ENCODE measurements at regions of chr6 and their contacts with region 1.

Region 1: DNA sequence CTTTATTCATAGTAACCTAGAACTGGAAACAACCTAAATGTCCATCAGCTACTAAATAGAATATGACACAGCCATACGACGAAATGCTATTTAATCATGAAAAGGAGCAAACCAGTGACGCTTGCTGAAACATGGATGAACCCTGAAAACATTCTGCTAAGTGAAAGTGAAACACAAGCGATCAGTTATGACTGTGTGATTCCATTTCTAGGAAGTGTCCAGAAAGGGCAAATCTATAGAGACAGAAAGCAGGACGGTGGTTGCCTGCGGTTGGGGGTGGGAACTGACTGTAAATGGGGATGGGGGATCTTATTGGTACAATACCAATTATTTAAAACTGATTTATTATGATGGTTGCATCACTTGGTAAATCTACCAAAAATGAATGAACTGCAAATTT is 126.8 kb downstream of the IPCEF1 start:
- DNase-seq: peak; percentile 84
- H3K4me3 Mint-ChIP-seq: peak overlapping the region; percentile 66
- H3K27ac Mint-ChIP-seq: peak overlapping the region; percentile 86
- H3K4me1 Mint-ChIP-seq: peaks cover 81% of the 10 kb centered on the region
- H3K27me3 Mint-ChIP-seq: no peaks in the 10 kb centered on the region

Region 2: DNA sequence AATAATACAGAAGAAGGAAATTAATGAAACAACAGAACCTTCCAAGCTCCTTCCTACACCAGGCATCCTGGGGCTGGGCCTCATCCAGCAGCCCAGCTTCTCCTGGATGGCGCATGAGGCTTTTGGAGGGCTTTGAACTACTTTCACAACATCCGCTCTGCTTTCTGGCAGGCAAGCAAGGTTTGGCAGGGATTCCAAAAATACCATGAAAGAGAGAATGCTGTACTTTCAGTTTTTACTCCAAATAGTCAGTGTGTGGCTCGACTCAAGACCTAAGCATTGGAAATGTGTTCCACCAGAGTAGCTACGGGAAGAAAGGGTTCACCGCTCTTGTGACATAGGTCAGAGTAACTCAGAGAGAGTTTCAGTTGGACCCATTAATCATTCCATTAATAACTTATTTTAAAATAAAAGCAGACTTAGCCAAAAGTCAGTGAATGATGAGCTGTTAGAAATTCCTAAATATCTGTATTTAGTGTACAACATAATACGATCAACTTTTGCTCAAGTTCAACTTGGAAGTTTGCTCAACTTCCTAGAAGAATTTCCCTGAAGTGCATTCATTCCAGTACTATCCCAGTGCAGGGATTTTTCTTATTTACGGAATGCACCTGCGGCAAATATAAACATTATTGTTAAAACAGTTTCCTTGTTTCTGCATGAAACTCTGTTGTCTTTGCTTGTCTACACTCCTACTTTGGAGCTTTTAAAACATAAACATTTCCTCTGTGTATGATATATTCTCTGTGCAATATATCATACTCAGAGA is 65.2 kb before region 1 on chr6:
- CTCF ChIA-PET with region 1: no interaction called
- intact Hi-C with region 1: loop called (anchors 1 kb)
- DNase-seq: no peak
- H3K4me3 Mint-ChIP-seq: peak overlapping the region; percentile 23
- H3K27ac Mint-ChIP-seq: no peak overlapping the region
- H3K4me1 Mint-ChIP-seq: peaks cover 53% of the 10 kb centered on the region
- H3K27me3 Mint-ChIP-seq: no peaks in the 10 kb centered on the region

Region 3: GRCh38 chr6:154197196-154197860 is 32.5 kb before region 1 on chr6:
- CTCF ChIA-PET with region 1: no interaction called
- intact Hi-C with region 1: loop called (anchors 2 kb)
- DNase-seq: no peak
- H3K4me3 Mint-ChIP-seq: peak overlapping the region; percentile 28
- H3K27ac Mint-ChIP-seq: no peak overlapping the region
- H3K4me1 Mint-ChIP-seq: peaks cover 60% of the 10 kb centered on the region
- H3K27me3 Mint-ChIP-seq: no peaks in the 10 kb centered on the region

Region 4: DNA sequence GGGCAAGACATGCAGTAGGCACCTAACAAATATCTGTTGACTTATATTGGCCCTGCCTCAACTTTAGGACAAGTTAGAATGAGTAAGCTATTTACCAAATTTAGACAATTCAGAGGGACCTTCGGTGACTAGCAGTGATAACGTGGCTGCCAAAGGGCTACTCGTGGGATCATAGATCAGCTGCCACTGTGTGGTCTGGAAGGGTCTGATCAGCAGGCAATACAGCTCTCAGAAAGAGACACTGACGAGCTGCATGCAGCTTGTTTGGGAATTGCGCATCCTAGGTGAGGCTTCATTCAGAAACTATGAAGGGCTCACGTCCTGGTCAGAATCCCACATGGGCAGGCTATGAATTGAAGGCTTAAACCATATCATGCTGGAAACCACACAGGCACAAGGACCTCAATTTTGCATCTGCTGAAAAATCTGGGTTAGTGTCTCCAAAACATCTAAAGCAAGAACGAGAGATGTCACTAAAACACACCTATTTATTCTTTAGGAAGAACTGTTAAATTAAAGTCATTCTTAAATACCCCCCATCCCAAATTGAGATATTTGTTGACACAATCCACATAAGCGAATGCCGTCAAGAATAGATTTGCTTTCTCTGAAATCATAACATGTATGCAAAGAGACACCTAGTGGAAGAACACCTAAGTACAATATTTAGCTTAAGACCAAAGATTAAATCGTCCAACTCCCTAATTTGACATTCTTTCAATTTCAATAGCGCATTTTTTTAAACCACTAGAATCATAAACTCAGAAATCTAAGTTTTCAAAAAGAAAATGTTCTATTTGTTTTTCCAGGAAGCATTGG is 47.2 kb after region 1 on chr6:
- CTCF ChIA-PET with region 1: interaction called, 19 read pairs
- intact Hi-C with region 1: no loop called
- DNase-seq: no peak
- H3K4me3 Mint-ChIP-seq: peak overlapping the region; percentile 65
- H3K27ac Mint-ChIP-seq: no peak overlapping the region
- H3K4me1 Mint-ChIP-seq: peaks cover 34% of the 10 kb centered on the region
- H3K27me3 Mint-ChIP-seq: no peaks in the 10 kb centered on the region

Region 5: DNA sequence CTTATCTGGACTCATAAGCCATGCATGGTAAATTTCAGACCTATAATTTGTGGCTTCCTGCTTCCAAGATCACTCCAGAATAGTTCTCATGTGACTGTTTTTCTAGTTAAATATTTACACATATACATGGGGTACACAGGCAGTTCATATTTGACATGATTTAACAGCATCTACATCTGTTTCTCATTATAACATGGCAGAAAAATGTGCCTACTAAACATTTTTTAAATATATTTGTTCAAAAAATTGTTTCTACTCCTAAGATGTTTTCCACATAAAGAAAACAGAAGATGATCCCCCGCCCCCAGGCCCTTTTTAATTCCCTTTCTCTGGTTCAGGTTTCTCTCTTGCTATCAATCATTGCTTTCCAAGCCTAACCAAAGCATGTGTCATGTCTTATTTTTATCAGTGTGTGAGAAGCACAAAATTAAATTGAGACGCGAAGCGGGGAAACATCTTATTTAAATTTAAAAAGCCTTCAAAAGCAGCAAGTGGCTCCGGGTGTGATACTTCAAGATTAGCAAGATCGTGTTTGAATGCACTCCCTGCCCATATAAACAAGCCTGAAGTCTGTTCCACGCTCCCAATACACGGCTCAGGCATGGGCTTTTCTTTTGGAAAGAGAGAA is 89.6 kb after region 1 on chr6:
- CTCF ChIA-PET with region 1: no interaction called
- intact Hi-C with region 1: no loop called
- DNase-seq: no peak
- H3K4me3 Mint-ChIP-seq: no peak overlapping the region
- H3K27ac Mint-ChIP-seq: no peak overlapping the region
- H3K4me1 Mint-ChIP-seq: peaks cover 2% of the 10 kb centered on the region
- H3K27me3 Mint-ChIP-seq: no peaks in the 10 kb centered on the region

Region 6: DNA sequence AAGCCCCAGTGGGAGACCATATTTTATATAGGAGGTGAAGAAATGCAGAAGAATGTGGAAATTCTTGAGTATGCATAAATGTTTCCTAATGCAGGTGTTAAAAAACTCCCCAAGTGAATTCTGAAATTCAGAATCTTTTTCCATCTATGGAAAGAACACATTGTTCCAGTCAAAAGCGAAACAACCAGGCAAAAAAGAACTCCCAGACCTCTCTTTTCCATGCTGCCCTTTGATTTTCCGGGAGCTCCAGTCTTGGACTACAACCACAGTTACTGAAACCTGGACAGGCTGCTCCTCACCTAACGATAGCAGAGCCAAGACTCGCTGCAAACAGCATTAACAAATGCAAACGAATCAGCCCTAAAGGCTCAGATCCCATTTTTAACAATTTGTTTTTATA is 389.4 kb after region 1 on chr6:
- CTCF ChIA-PET with region 1: no interaction called
- intact Hi-C with region 1: no loop called
- DNase-seq: no peak
- H3K4me3 Mint-ChIP-seq: no peak overlapping the region
- H3K27ac Mint-ChIP-seq: no peak overlapping the region
- H3K4me1 Mint-ChIP-seq: peaks cover 4% of the 10 kb centered on the region
- H3K27me3 Mint-ChIP-seq: no peaks in the 10 kb centered on the region